Sigmoid colon (tissue), 7 donors: ENCODE measurements at regions of chr13 and their contacts with region 1.

Region 1: DNA sequence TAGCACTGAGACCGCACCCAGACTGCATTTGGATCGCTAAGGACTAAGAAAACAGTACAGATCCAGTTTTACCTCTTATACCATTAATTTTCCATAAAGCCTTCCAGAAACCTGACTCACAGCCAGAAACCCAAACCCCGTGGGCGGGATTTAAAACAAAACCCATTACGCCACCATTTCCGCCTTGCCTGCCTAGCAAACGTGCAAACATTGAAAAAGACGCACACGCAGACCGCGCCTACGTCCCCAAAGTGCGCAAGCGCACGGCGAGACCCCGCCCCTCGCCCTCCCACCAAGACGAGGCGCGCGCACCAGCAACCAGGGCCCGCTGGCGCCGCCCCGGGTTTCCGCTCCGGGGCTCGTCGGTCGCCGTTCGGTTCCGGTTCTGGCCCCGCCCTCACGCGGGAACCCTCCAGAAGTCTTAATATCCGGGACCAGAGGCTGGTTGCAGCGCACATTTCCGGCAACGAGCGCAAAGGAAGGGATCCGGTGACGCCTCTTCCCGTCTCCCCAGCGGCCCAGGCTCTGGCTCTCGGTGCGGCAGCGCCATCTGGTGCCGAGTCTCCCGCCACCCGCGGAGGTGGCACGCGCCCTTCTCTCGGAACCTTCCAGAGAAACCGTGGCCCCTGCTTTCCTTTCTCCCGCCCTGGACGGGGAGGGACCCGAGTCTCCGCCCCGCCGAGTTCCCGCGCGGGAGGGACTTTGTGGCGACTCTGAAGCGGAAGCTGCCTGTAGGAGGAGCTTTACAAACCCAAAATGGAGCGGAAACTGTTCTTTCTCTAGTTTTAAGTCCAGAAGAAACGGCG is 256.9 kb upstream of the STARD13 start:
- DNase-seq: peak; percentile 99
- H3K4me3 ChIP-seq: peak overlapping the region; percentile 34 to 54 (median 46)
- H3K27ac ChIP-seq: peak overlapping the region; percentile 91 to 96 (median 95)
- H3K4me1 ChIP-seq: peaks cover 0 to 51% (median 49%) of the 10 kb centered on the region in 4 donors
- H3K27me3 ChIP-seq: no peaks in the 10 kb centered on the region
- CTCF ChIP-seq: peak in 3 of 4 experiments; percentile 82 to 89 (median 84)
- EP300 ChIP-seq: peak; percentile 64 to 90 (median 88)
- POLR2A ChIP-seq: peak; percentile 54 to 61

Region 2: GRCh38 chr13:33110713-33111413 is 431.6 kb before region 1 on chr13:
- intact Hi-C with region 1: loop called (anchors 5 kb)
- DNase-seq: no peak
- H3K4me3 ChIP-seq: no peak overlapping the region
- H3K27ac ChIP-seq: peak overlapping the region; percentile 74 to 83 (median 79)
- H3K4me1 ChIP-seq: peaks cover 0 to 100% (median 96%) of the 10 kb centered on the region in 4 donors
- H3K27me3 ChIP-seq: no peaks in the 10 kb centered on the region
- CTCF ChIP-seq: no peak
- EP300 ChIP-seq: no peak
- POLR2A ChIP-seq: no peak

Region 3: GRCh38 chr13:33228648-33229445 is 313.6 kb before region 1 on chr13:
- intact Hi-C with region 1: loop called (anchors 5 kb)
- DNase-seq: no peak
- H3K4me3 ChIP-seq: no peak overlapping the region
- H3K27ac ChIP-seq: peak overlapping the region; percentile 66 to 80 (median 71)
- H3K4me1 ChIP-seq: peaks cover 0 to 65% (median 54%) of the 10 kb centered on the region in 4 donors
- H3K27me3 ChIP-seq: no peaks in the 10 kb centered on the region
- CTCF ChIP-seq: peak; percentile 80 to 87 (median 82)
- EP300 ChIP-seq: no peak
- POLR2A ChIP-seq: no peak

Region 4: DNA sequence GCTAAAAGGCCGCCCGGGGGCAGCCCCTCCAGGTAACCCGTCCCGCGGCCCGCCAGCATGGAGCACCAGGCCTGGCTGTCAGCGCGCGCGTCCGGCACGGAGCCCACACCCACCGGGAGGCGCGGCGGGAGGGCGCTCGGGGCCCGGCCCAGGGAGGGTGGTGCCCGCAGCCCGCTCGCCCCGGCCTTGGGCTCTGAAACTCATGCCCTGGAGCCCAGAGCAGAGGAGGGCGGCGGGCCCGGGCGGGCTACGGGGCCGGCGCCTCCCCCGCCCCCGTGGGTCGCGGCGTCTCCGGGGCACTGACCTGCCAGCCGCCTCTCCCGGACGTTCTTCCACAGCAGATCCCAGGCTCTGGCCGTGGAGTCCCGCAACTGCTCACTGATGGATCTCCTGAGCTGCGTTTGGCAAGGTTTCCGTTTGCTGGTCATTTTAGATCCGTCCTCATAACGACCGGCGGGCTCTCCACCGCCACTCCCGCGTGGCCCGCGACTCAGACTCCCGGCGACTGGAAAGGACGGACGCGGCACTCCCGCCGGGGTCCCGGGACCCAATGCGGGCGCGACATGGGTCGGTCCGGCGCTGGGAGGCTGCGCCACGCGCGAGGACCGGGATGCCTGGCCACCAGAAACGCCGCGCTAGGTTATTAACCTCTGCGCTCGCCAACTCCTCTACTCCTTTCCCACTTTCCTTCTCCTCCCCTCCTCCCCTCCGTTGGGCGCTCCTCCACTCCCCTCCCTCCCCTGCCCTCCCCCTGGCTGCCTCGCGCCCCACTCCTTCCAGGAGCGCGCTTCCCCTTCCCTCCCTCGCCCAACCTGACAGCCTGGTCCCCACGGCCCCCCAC is 192.3 kb before region 1 on chr13:
- intact Hi-C with region 1: loop called (anchors 2 kb)
- DNase-seq: peak; percentile 88
- H3K4me3 ChIP-seq: peak overlapping the region; percentile 62 to 81 (median 71)
- H3K27ac ChIP-seq: peak overlapping the region; percentile 88 to 96 (median 93)
- H3K4me1 ChIP-seq: peaks cover 0 to 44% (median 25%) of the 10 kb centered on the region in 4 donors
- H3K27me3 ChIP-seq: no peaks in the 10 kb centered on the region
- CTCF ChIP-seq: no peak
- EP300 ChIP-seq: no peak
- POLR2A ChIP-seq: peak; percentile 4 to 20

Region 5: DNA sequence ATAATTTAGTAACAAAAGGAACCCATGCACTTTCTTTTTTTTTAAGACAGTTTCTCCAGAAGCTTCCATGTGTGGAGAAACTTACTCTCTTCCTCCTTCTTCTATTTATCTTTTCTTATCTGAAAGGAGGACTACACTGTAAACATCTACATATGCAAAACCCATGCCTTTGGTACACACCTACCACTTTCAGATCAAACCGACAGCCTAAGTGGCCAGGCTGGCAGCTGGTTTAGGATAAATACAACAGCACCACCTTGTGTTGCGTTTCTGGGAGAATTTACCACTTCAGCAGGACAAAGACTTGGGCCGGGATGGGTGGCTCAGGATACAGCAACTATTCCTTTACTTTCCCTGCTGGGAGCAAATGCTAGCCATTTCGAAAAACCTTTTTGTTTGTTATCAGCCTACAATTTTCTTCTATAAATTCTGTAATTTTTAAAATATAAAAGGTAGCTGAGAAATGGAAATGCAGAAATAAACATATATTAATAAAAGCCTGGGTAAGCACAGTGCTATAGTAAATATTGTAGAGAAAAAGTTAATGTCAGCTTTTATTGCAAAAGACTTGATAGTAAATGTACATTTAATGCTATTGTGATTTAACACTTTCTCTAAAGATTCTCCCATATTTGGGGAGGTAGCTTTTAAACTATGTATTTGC is 181.4 kb after region 1 on chr13:
- intact Hi-C with region 1: loop called (anchors 2 kb)
- DNase-seq: peak; percentile 90
- H3K4me3 ChIP-seq: no peak overlapping the region
- H3K27ac ChIP-seq: peak overlapping the region; percentile 61 to 72 (median 70)
- H3K4me1 ChIP-seq: peaks cover 0 to 37% (median 28%) of the 10 kb centered on the region in 4 donors
- H3K27me3 ChIP-seq: no peaks in the 10 kb centered on the region
- CTCF ChIP-seq: peak; percentile 55 to 81 (median 68)
- EP300 ChIP-seq: no peak
- POLR2A ChIP-seq: no peak